SK-N-SH (cell line): ENCODE measurements at regions of chr12 and their contacts with region 1.

Region 1: DNA sequence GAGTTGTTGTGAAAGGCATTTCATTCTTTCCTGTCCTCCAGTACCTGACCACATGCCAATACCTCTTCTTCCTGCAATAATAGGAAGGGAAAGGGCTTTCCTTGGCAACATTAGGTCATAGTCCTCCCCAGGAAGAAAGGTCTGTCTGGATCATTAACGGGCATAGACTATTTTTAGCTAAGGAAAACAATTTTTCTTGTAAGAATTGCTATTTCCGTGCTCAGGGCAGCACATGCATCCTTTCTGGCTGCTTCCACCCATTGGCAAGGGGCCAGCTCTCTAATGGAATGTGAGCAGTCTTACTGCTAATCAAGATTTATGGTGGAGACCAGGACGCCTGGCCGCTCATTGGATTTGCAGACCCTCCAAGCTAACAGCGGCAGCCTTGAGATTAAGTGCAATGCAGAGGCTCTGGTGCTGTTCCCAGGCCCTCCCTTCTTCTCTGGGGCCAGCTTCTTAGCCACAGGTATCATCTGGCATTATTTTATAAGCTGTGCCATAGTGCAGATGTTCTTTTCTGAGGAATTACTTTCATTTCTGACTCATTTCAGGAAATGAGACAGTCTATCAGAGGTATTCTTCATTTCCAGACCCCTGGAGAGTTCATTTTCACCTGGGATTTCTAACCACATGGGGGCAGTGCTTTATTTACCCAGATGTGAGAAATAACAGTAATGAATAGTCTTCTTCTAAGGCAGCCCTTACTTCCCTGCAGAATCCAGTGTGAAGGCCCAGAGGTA is 52.9 kb downstream of the ANO6 start:
- DNase-seq: peak; percentile 58
- H3K4me3 ChIP-seq: peak overlapping the region; percentile 19 to 31; a peak in 2 of 4 replicates
- H3K27ac ChIP-seq: peak overlapping the region; percentile 87 to 93
- H3K4me1 ChIP-seq: peaks cover 19 to 26% of the 10 kb centered on the region in 2 experiments
- H3K27me3 ChIP-seq: no peaks in the 10 kb centered on the region
- CTCF ChIP-seq: peak; percentile 72
- EP300 ChIP-seq: peak; percentile 82 to 84
- RAD21 ChIP-seq: peak; percentile 77

Region 2: GRCh38 chr12:45215419-45216229 is 53.2 kb before region 1 on chr12 and contains the start of gene ANO6:
- CTCF ChIA-PET with region 1: interaction called, 10 read pairs
- POLR2A ChIA-PET with region 1: no interaction called
- DNase-seq: peak; percentile 87
- H3K4me3 ChIP-seq: peak within 1 kb of the TSS; percentile 86 to 92
- H3K27ac ChIP-seq: peak within 1 kb of the TSS; percentile 98 to 99
- H3K4me1 ChIP-seq: peaks cover 0 to 3% of the 10 kb centered on the region in 2 experiments; a peak in 2 of 4 replicates
- H3K27me3 ChIP-seq: no peaks in the 10 kb centered on the region
- CTCF ChIP-seq: peak; percentile 49
- EP300 ChIP-seq: 0 out of 4 replicates have a peak, but pooled peaks have one; percentile 12 to 14
- RAD21 ChIP-seq: peak; percentile 58
- polyA plus RNA-seq, gene ANO6: 20.1 and 26.7 TPM in 2 replicates